ENCODE measurements at regions of chr9 and their contacts with region 1.

Region 1: DNA sequence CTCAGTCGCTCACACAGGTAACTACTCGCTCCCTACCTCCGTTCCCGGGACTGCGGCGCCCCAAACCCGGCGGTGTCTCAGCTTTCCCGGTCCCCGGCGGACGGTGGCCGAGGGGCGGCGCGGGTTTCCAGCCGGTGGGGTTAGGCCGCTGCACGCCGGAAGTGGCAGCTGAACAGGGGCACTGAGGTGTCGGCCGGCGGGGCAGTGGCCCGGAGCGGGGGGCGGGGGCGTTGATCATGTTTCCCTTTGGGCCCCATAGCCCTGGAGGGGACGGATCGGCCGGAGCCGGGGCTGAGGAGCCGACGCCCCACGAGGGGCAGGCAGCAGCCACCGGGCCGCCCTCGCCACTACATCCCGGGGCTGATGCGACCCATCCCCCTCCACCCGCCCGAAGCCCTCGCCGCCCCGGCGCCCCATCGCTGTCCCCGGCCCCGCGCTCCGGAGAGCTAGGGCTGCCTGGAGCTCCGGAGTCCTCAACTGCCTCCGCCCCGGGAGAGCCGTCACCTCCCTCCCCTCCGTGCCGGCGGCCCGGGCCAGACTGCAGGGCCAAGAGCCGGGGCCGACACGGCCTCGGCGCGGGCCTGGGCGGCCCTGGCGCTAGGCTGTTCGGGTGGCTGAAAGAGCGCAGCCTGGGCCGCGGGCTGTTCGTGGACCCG is at the start of gene DCAF10:
- DNase-seq: peak; percentile 77 to 93 (median 86)
- ATAC-seq: peak; percentile 82
- H3K4me3 ChIP-seq: peak within 1 kb of the TSS; percentile 93
- H3K4me3 Mint-ChIP-seq: peak within 1 kb of the TSS; percentile 95
- H3K27ac ChIP-seq: peak within 1 kb of the TSS; percentile 60 to 70
- H3K27ac Mint-ChIP-seq: peak within 1 kb of the TSS; percentile 83
- H3K4me1 ChIP-seq: peaks cover 24% of the 10 kb centered on the region
- H3K4me1 Mint-ChIP-seq: peaks cover 43% of the 10 kb centered on the region
- H3K27me3 ChIP-seq: no peaks in the 10 kb centered on the region
- H3K27me3 Mint-ChIP-seq: no peaks in the 10 kb centered on the region
- CTCF ChIP-seq: no peak
- total RNA-seq, gene DCAF10: 7.2 to 7.5 TPM

Region 2: DNA sequence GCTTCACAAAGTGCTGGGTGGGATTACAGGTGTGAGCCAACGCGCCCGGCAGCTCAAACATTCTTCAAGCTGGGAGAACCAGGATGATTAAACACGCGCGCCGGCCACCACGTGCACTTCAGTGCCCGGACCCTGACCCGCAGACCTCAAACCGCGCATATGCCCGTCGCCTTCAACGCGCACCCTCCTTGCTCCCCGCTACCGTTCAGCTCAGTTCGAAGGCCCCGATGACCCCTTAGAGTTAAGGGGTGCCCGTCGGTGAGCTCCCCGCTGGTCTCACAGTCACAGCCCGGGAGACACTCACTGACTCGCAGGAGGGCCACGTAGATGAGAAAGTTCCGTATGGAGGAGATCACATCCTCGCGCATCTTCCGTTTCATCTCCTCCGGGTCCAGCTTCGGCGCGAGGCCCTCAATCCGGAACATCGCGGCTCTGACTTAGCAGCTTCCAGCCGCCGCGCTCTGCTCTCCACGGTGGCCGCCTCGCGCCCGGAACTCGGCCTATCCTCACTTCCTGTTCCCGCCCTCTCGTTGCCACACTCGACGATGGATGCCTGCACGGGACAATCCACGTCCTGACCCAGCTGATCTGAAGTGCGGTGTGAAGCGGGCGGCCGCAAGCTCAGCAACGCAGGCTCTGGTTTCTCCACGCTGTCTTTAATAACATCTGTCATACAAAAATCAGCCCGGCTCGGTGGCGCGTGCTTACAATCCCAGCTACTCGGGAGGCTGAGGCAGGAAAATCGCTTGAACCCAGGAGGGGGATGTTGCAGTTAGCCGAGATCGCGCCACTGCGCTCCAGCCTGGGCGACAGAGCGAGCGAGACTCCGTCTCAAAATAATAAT is 208.4 kb before region 1 on chr9 and contains the start of gene TOMM5:
- CTCF ChIA-PET with region 1: no interaction called
- POLR2A ChIA-PET with region 1: no interaction called
- intact Hi-C with region 1: loop called in 1 of 2 experiments (anchors 5 kb)
- DNase-seq: peak; percentile 83 to 95 (median 86)
- ATAC-seq: peak; percentile 94
- H3K4me3 ChIP-seq: peak within 1 kb of the TSS; percentile 100
- H3K4me3 Mint-ChIP-seq: peak within 1 kb of the TSS; percentile 99
- H3K27ac ChIP-seq: peak within 1 kb of the TSS in 1 of 2 donors; percentile 64
- H3K27ac Mint-ChIP-seq: peak within 1 kb of the TSS; percentile 92
- H3K4me1 ChIP-seq: peaks cover 33% of the 10 kb centered on the region
- H3K4me1 Mint-ChIP-seq: peaks cover 50% of the 10 kb centered on the region
- H3K27me3 ChIP-seq: peaks cover 7% of the 10 kb centered on the region in 2 experiments
- H3K27me3 Mint-ChIP-seq: peaks cover 12% of the 10 kb centered on the region
- CTCF ChIP-seq: no peak
- total RNA-seq, gene TOMM5: 31.4 to 35.3 TPM

Region 3: DNA sequence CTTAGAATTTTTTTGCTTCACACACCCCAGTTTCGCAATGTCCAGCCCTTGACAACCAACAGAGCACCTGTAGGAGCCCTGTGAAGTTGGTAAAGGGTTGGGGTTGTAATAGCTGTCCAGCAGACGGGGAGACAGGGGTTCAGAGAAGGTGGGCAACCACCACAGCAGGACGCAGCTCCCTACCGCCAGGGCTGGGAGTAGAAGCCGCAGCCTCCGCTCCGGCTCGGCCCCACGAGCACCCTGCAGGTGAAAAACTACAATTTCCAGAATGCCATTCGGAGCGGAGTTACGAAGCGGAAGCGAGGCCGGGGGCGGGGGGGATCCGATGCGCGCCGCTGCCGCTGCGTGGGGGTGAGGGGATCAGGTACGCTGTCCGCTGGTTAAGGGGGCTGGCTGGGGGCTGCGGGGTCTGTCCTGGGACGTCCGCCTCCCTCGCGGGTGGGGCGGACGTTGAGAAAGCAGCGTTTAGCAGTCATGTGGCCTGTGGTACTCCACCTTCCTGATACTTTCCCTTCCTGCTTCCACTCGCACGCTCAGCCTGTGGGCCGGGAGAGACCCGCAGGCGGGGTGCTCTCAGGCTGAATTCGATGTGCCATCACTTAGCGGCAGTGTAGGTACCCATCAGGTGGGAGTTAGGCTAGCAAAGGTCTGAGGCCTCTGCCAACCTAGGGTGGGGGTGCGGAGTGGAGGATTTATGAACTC is 47.1 kb before region 1 on chr9 and contains the start of gene TRMT10B:
- CTCF ChIA-PET with region 1: interaction called, 3 read pairs
- POLR2A ChIA-PET with region 1: no interaction called
- intact Hi-C with region 1: loop called (anchors 1 kb)
- DNase-seq: peak; percentile 50 to 85 (median 62)
- ATAC-seq: peak; percentile 93
- H3K4me3 ChIP-seq: peak within 1 kb of the TSS; percentile 97
- H3K4me3 Mint-ChIP-seq: peak within 1 kb of the TSS; percentile 93
- H3K27ac ChIP-seq: peak within 1 kb of the TSS; percentile 69 to 78
- H3K27ac Mint-ChIP-seq: peak within 1 kb of the TSS; percentile 88
- H3K4me1 ChIP-seq: peaks cover 18% of the 10 kb centered on the region
- H3K4me1 Mint-ChIP-seq: peaks cover 33% of the 10 kb centered on the region
- H3K27me3 ChIP-seq: no peaks in the 10 kb centered on the region
- H3K27me3 Mint-ChIP-seq: no peaks in the 10 kb centered on the region
- CTCF ChIP-seq: no peak
- total RNA-seq, gene TRMT10B: 6.6 to 8.3 TPM

Region 4: GRCh38 chr9:37903647-37904444 is 103.1 kb after region 1 on chr9 and contains the start of gene SLC25A51:
- CTCF ChIA-PET with region 1: interaction called, 3 read pairs
- POLR2A ChIA-PET with region 1: interaction called, 4 read pairs
- intact Hi-C with region 1: loop called in 1 of 2 experiments (anchors 5 kb)
- DNase-seq: peak; percentile 93 to 98 (median 95)
- ATAC-seq: peak; percentile 87
- H3K4me3 ChIP-seq: peak within 1 kb of the TSS; percentile 61
- H3K4me3 Mint-ChIP-seq: peak within 1 kb of the TSS; percentile 100
- H3K27ac ChIP-seq: peak within 1 kb of the TSS; percentile 57 to 70
- H3K27ac Mint-ChIP-seq: peak within 1 kb of the TSS; percentile 97
- H3K4me1 ChIP-seq: peaks cover 23% of the 10 kb centered on the region
- H3K4me1 Mint-ChIP-seq: peaks cover 33% of the 10 kb centered on the region
- H3K27me3 ChIP-seq: no peaks in the 10 kb centered on the region
- H3K27me3 Mint-ChIP-seq: no peaks in the 10 kb centered on the region
- CTCF ChIP-seq: peak; percentile 88
- total RNA-seq, gene SLC25A51: 13.3 to 13.8 TPM

Region 5: GRCh38 chr9:38068866-38069629 is 268.3 kb after region 1 on chr9 and contains the start of gene SHB:
- CTCF ChIA-PET with region 1: no interaction called
- POLR2A ChIA-PET with region 1: no interaction called
- intact Hi-C with region 1: loop called in 1 of 2 experiments (anchors 5 kb)
- DNase-seq: peak; percentile 60 to 94 (median 81)
- ATAC-seq: peak; percentile 77
- H3K4me3 ChIP-seq: peak within 1 kb of the TSS; percentile 67
- H3K4me3 Mint-ChIP-seq: peak within 1 kb of the TSS; percentile 87
- H3K27ac ChIP-seq: no peak within 1 kb of the TSS
- H3K27ac Mint-ChIP-seq: peak within 1 kb of the TSS; percentile 29
- H3K4me1 ChIP-seq: peaks cover 26% of the 10 kb centered on the region
- H3K4me1 Mint-ChIP-seq: peaks cover 30% of the 10 kb centered on the region
- H3K27me3 ChIP-seq: no peaks in the 10 kb centered on the region
- H3K27me3 Mint-ChIP-seq: no peaks in the 10 kb centered on the region
- CTCF ChIP-seq: peak; percentile 34
- total RNA-seq, gene SHB: 1.1 to 1.2 TPM

Measured in CD4-positive, alpha-beta T cell (primary cell).